CD8-positive, alpha-beta memory T cell (primary cell): ENCODE measurements at regions of chr3 and their contacts with region 1.

Region 1: GRCh38 chr3:158644345-158644908 is at the start of gene GFM1:
- DNase-seq: peak; percentile 82 to 92 (median 88)
- H3K4me3 ChIP-seq: peak within 1 kb of the TSS; percentile 80
- H3K4me3 Mint-ChIP-seq: peak within 1 kb of the TSS; percentile 84 to 99 (median 95)
- H3K27ac ChIP-seq: peak within 1 kb of the TSS; percentile 70
- H3K27ac Mint-ChIP-seq: peak within 1 kb of the TSS; percentile 15 to 96 (median 92)
- H3K4me1 ChIP-seq: peaks cover 14% of the 10 kb centered on the region
- H3K4me1 Mint-ChIP-seq: peaks cover 49 to 75% (median 70%) of the 10 kb centered on the region in 3 donors
- H3K27me3 ChIP-seq: no peaks in the 10 kb centered on the region
- H3K27me3 Mint-ChIP-seq: no peaks in the 10 kb centered on the region
- total RNA-seq, gene GFM1: 91.2 to 99.9 TPM

Region 2: DNA sequence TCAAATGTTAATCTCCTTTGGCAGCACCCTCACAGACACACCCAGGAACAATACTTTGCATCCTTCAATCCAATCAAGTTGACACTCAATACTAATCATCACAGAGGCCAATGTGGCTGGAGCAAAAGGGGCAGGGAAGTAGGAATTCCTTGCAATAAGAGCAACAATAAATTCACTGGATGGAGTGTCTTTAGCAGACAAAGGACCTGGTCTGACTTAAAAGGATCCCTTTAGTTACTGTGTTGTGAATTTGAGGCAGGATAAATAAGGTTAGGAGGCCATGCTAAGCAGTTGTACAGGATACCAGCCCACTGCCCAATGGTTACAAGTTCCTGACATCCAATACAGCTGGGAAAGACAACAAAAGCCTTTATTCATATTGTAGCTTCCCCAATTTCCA is 12.4 kb before region 1 on chr3:
- CTCF ChIA-PET with region 1: no interaction called
- POLR2A ChIA-PET with region 1: no interaction called
- DNase-seq: no peak
- H3K4me3 ChIP-seq: no peak overlapping the region
- H3K4me3 Mint-ChIP-seq: no peak overlapping the region
- H3K27ac ChIP-seq: no peak overlapping the region
- H3K27ac Mint-ChIP-seq: no peak overlapping the region
- H3K4me1 ChIP-seq: no peaks in the 10 kb centered on the region
- H3K4me1 Mint-ChIP-seq: no peaks in the 10 kb centered on the region
- H3K27me3 ChIP-seq: no peaks in the 10 kb centered on the region
- H3K27me3 Mint-ChIP-seq: peaks cover 10 to 46% of the 10 kb centered on the region in 2 donors

Region 3: DNA sequence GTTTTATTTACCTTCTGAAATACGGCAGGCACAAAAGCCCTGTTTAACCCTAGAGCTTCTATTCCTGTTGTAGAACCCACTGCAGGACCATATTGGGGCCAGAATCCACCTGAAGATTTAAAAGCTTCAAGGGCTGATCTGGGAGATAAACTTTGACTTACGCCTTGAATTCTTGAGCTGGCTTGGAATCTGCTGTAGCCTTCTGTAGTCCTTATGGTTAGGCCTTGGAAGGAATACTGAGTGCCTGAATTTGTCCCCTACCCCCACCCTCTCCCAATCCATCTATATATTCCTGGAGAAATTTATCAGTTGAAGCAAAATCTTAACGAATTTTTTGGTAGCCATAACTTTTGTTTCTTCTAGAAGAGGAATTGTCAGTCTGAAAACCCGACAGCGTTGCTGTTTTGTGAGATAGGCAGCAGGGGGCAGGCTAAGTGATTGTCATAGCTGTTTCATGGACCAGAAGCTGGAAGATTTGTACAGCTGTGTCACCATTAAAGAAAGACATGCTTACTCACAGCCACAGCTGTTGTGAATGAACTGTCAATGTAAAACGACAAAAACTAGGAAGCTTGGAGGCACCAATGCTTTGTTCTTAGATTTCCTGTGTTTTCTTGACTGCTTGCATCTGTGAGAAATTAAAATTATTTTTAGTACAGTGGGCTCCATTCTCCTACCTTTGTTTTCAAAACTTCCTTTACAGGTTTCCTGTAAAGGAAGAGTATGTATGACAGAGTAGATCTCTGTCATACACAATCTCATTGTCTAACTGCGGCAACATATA is 15.2 kb after region 1 on chr3:
- CTCF ChIA-PET with region 1: interaction called, 28 read pairs
- POLR2A ChIA-PET with region 1: interaction called, 3 read pairs
- DNase-seq: peak in 4 of 5 donors; percentile 15 to 54 (median 24)
- H3K4me3 ChIP-seq: no peak overlapping the region
- H3K4me3 Mint-ChIP-seq: no peak overlapping the region
- H3K27ac ChIP-seq: no peak overlapping the region
- H3K27ac Mint-ChIP-seq: peak overlapping the region in 5 of 8 donors; percentile 10 to 50 (median 42)
- H3K4me1 ChIP-seq: no peaks in the 10 kb centered on the region
- H3K4me1 Mint-ChIP-seq: peaks cover 2 to 23% (median 21%) of the 10 kb centered on the region in 3 donors
- H3K27me3 ChIP-seq: no peaks in the 10 kb centered on the region
- H3K27me3 Mint-ChIP-seq: no peaks in the 10 kb centered on the region

Region 4: GRCh38 chr3:158801696-158802408 is 157.4 kb after region 1 on chr3 and contains the start of gene MFSD1:
- CTCF ChIA-PET with region 1: interaction called, 15 read pairs
- POLR2A ChIA-PET with region 1: interaction called, 5 read pairs
- DNase-seq: peak; percentile 85 to 93 (median 87)
- H3K4me3 ChIP-seq: peak within 1 kb of the TSS; percentile 95
- H3K4me3 Mint-ChIP-seq: peak within 1 kb of the TSS; percentile 80 to 95 (median 90)
- H3K27ac ChIP-seq: peak within 1 kb of the TSS; percentile 71
- H3K27ac Mint-ChIP-seq: peak within 1 kb of the TSS; percentile 71 to 97 (median 92)
- H3K4me1 ChIP-seq: peaks cover 33% of the 10 kb centered on the region
- H3K4me1 Mint-ChIP-seq: peaks cover 26 to 54% (median 46%) of the 10 kb centered on the region in 3 donors
- H3K27me3 ChIP-seq: no peaks in the 10 kb centered on the region
- H3K27me3 Mint-ChIP-seq: no peaks in the 10 kb centered on the region
- total RNA-seq, gene MFSD1: 25.3 to 26.4 TPM